IMR-90 (cell line): ENCODE measurements at regions of chr7 and their contacts with region 1.

Region 1: GRCh38 chr7:38318803-38319416 is 45.5 kb upstream of the TARP start:
- DNase-seq: peak; percentile 81
- ATAC-seq: peak; percentile 84
- H3K4me3 ChIP-seq: no peak overlapping the region
- H3K27ac ChIP-seq: no peak overlapping the region
- H3K4me1 ChIP-seq: peaks cover 7% of the 10 kb centered on the region; the same call in 1 of the 2 replicates
- H3K27me3 ChIP-seq: peaks cover under 1% of the 10 kb centered on the region; the same call in 1 of the 2 replicates
- CTCF ChIP-seq: peak; percentile 70
- POLR2A ChIP-seq: no peak
- RAD21 ChIP-seq: peak; percentile 77

Region 2: DNA sequence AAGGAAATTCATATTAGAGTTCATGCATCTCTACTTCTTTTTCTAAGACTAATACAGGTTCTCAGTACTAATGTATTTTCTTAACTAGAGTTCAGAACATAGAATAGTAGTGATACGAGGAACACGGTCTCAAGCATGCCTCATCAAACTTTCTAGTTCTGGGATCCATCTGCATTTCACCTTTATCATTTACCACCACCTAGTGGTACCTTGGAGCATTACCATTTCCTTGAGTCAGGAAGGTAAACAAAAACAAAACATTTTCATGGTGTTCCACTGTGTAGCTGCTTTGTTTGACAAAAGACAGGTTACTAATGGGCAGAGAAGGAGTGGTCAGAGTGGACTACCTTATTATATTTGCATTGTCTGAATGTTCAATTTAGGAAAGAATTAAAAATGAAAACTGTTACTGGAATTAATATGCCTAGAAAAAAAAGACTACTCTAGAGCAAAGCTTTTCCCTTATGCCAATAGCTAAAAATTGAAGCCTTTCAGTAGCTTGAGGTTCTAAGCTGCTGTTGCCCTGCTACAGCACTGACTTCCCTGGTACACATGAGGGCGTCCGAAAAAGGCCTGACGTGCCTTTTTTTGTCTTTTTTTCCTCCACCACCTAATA is 96.3 kb before region 1 on chr7:
- CTCF ChIA-PET with region 1: interaction called, 7 read pairs
- POLR2A ChIA-PET with region 1: no interaction called
- dilution Hi-C with region 1: no loop called
- in situ Hi-C with region 1: no loop called
- intact Hi-C with region 1: loop called (anchors 2 kb)
- DNase-seq: peak; percentile 62
- ATAC-seq: peak; percentile 79
- H3K4me3 ChIP-seq: no peak overlapping the region
- H3K27ac ChIP-seq: no peak overlapping the region
- H3K4me1 ChIP-seq: peaks cover 3% of the 10 kb centered on the region; the same call in 1 of the 2 replicates
- H3K27me3 ChIP-seq: no peaks in the 10 kb centered on the region
- CTCF ChIP-seq: peak; percentile 83
- POLR2A ChIP-seq: no peak
- RAD21 ChIP-seq: peak; percentile 84

Region 3: DNA sequence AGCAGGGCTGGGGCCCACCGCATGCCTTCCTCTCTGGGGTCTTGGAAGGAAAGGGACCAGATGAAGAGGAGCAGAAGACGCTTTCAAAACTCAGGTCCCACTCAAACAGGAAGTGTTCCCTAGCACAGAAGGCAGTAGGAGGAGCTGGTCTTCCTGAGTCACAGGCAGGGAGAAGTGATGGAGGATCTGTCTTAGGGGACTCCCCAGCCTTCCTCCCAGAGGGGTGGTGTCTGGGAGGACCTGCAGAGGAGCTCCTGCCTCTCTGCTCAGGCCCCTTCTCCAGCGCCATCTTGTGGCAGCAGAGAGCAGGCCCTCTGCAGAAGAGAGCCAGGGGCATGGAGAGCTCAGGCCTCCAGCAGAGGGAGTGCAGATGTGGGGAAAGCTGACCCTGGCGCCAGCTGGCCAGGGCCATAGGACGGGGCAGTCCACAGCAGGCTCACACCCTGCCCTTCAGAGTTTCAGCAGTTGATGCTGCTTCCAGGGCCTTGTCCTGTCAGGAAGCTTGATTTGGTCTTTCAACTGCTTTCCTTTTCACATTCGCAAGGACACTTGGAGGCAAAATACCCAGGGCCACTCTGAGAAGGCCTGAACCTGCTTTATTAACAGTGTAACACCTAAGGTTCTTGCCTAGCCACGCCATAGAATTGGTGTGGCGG is 16.7 kb after region 1 on chr7:
- CTCF ChIA-PET with region 1: interaction called, 23 read pairs
- POLR2A ChIA-PET with region 1: no interaction called
- dilution Hi-C with region 1: no loop called
- in situ Hi-C with region 1: no loop called
- intact Hi-C with region 1: no loop called
- DNase-seq: peak; percentile 94
- ATAC-seq: peak; percentile 99
- H3K4me3 ChIP-seq: no peak overlapping the region
- H3K27ac ChIP-seq: no peak overlapping the region
- H3K4me1 ChIP-seq: peaks cover 2% of the 10 kb centered on the region; the same call in 1 of the 2 replicates
- H3K27me3 ChIP-seq: no peaks in the 10 kb centered on the region
- CTCF ChIP-seq: peak; percentile 99
- POLR2A ChIP-seq: no peak
- RAD21 ChIP-seq: peak; percentile 78

Region 4: GRCh38 chr7:38524786-38525185 is 205.9 kb after region 1 on chr7:
- CTCF ChIA-PET with region 1: no interaction called
- POLR2A ChIA-PET with region 1: no interaction called
- dilution Hi-C with region 1: no loop called
- in situ Hi-C with region 1: no loop called
- intact Hi-C with region 1: no loop called
- DNase-seq: peak; percentile 44
- ATAC-seq: no peak
- H3K4me3 ChIP-seq: no peak overlapping the region
- H3K27ac ChIP-seq: no peak overlapping the region
- H3K4me1 ChIP-seq: no peaks in the 10 kb centered on the region
- H3K27me3 ChIP-seq: no peaks in the 10 kb centered on the region
- CTCF ChIP-seq: no peak
- POLR2A ChIP-seq: no peak
- RAD21 ChIP-seq: no peak